ENCODE measurements at regions of chr2 and their contacts with region 1.

Region 1: DNA sequence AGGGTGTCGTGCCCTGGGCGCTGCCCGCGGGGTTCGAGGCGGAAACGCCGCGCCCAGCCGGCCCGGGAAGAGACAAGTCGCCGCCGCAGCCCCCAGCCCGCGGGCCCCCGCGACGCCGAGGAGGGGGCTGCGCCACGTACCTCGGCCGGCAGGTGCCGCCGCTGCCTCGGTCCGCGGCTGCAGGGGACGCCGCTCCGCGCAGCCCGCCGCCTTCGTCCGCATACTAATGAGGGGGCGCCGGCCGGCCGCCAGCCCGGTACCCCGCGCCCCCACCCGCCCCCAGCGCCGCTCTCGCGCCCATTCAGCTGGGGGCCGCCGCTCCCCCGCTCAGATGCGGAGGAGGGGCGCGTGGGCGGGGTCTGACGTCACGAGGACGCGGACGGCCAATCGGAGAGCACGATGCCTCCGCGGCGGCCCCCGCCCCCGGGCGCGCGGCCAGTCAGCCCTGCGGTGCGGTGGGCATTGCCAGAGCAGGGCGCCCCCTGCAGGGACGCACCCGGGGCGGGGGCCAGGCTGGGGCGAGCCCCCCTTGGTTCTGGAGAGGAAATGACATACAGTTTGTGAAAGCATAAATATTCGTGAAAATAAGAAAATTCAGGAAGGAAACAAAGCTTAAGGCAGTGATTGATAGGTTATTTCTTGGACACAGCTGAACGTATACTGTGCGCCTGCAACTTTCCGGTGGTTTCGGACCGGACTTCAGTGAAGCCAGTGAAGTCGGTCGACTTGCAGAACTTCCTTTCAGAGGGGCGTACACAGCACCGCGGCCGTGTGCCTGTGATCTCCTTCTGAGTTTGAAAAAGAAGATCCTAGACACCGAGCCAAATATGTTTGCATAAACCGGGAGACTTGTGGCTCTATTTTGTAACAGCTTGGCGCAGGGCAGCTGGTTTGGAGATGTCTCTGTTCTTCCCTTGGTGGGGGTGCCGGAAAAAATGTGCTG is at the start of gene ST3GAL5:
- DNase-seq: peak; percentile 91 to 98 (median 96)
- ATAC-seq: peak; percentile 89
- H3K4me3 ChIP-seq: peak within 1 kb of the TSS; percentile 63
- H3K27ac ChIP-seq: peak within 1 kb of the TSS; percentile 33
- H3K4me1 ChIP-seq: peaks cover 31 to 35% of the 10 kb centered on the region in 2 experiments; a peak in 4 of 5 replicates
- H3K27me3 ChIP-seq: no peaks in the 10 kb centered on the region
- CTCF ChIP-seq: peak; percentile 65 to 78 (median 68)
- EP300 ChIP-seq: no peak
- POLR2A ChIP-seq: peak; percentile 52
- RAD21 ChIP-seq: peak; percentile 50 to 56; a peak in 3 of 4 replicates
- polyA plus RNA-seq, gene ST3GAL5: 1.6 to 1.8 TPM

Region 2: DNA sequence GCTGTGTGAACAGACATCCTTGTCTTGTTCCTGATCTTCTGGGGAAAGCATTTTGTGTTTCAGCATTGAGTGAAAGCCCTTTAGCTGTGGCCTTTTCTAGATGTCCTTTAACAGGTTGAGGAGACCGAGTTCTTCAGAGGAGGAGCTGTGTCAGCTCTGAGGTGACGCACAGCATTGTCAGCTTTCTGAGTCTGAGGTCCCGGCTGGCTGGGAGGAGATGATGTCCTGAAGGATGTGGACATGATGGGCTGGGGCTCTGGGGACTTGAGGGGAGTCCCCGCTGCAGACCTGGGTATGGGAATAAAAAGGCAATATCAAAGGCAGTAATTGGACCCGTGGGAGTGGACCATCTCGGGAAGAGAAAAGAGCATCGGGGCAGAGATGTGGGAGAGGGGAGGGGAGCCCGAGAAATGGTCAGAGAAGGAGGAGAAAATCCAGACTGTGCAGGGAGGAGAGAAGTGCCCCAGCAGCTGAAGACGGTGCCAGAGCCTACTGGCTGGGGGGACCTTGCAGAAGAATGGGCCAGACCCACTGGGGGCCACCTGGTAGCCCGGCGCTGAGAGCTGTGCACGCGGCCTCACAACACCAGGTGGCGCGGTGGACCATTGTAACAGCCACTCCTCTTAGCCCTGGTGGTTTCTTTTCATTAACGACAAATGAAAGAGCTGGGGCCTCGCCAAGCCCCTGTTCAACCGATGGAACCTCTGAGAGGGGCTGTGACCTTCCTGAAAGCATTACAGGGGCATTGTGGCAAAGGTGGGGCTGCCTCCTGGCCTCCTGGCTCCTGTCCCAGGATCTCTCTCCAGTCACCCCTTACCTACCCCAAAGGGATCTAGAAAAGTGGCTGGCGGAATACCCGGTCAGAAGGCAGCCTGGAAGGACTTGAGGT is 61.7 kb before region 1 on chr2:
- CTCF ChIA-PET with region 1: interaction called, 5 read pairs
- POLR2A ChIA-PET with region 1: no interaction called
- in situ Hi-C with region 1: no loop called
- intact Hi-C with region 1: loop called (anchors 5 kb)
- DNase-seq: peak; percentile 74 to 81 (median 79)
- ATAC-seq: peak; percentile 98
- H3K4me3 ChIP-seq: no peak overlapping the region
- H3K27ac ChIP-seq: no peak overlapping the region; the same call in 2 of the 3 replicates
- H3K4me1 ChIP-seq: peaks cover 7 to 8% of the 10 kb centered on the region in 2 experiments; a peak in 4 of 5 replicates
- H3K27me3 ChIP-seq: peaks cover 3 to 6% of the 10 kb centered on the region in 2 experiments; a peak in 3 of 5 replicates
- CTCF ChIP-seq: peak; percentile 89 to 95 (median 93)
- EP300 ChIP-seq: no peak
- POLR2A ChIP-seq: no peak
- RAD21 ChIP-seq: peak; percentile 96 to 98

Region 3: GRCh38 chr2:85935746-85936208 is 46.8 kb after region 1 on chr2:
- CTCF ChIA-PET with region 1: no interaction called
- POLR2A ChIA-PET with region 1: no interaction called
- in situ Hi-C with region 1: no loop called
- intact Hi-C with region 1: loop called (anchors 2 kb)
- DNase-seq: peak in 1 of 4 experiments; percentile 53
- ATAC-seq: no peak
- H3K4me3 ChIP-seq: no peak overlapping the region
- H3K27ac ChIP-seq: no peak overlapping the region
- H3K4me1 ChIP-seq: peaks cover 8 to 17% of the 10 kb centered on the region in 2 experiments; a peak in 4 of 5 replicates
- H3K27me3 ChIP-seq: no peaks in the 10 kb centered on the region
- CTCF ChIP-seq: no peak
- EP300 ChIP-seq: peak; percentile 16; the same call in 1 of the 2 replicates
- POLR2A ChIP-seq: no peak
- RAD21 ChIP-seq: no peak

Region 4: GRCh38 chr2:85954590-85955458 is 65.9 kb after region 1 on chr2:
- CTCF ChIA-PET with region 1: no interaction called
- POLR2A ChIA-PET with region 1: no interaction called
- in situ Hi-C with region 1: no loop called
- intact Hi-C with region 1: loop called (anchors 5 kb)
- DNase-seq: no peak
- ATAC-seq: no peak
- H3K4me3 ChIP-seq: no peak overlapping the region
- H3K27ac ChIP-seq: no peak overlapping the region; the same call in 2 of the 3 replicates
- H3K4me1 ChIP-seq: peaks cover 22 to 24% of the 10 kb centered on the region in 2 experiments
- H3K27me3 ChIP-seq: no peaks in the 10 kb centered on the region
- CTCF ChIP-seq: no peak
- EP300 ChIP-seq: no peak
- POLR2A ChIP-seq: no peak
- RAD21 ChIP-seq: no peak

Region 5: DNA sequence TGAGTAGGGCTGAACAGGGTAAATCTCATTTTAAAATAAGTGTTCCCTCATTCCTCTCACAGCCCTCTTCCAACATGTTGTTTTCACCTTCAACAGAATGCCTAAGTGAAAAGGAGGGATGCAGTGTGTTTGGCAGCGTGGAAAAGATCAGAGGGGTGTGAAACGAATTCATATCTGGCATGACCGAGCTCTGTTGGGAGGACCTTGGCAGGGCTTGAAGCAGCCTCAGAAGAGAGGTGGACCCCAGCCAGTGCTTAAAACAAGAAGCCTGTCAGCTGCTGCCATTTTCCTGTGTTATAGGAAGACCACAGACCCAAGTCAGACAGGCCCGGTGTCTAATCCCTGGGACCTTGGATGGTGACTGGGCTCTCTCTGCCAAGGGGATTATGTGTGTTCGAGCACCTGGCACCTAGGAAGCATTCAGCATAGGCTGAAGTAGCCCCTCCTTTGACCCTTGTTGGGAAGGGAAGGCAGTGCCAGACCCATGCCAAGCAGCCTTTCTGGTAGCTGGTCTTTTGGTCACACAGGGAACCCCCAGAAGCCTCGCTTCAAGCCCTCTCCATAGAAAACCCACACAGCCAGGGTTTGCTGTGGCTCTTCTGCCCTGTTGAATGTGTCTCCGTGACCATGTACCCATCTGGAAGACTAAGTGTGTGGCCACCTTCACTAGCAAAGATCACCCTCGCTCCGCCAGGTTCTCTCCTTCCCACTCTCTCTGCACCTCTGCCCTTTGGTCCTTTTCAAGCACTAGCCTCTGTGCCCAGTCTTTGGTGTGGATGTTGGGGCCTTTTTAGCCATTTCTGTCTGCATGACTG is 87.4 kb after region 1 on chr2:
- CTCF ChIA-PET with region 1: no interaction called
- POLR2A ChIA-PET with region 1: no interaction called
- in situ Hi-C with region 1: no loop called
- intact Hi-C with region 1: no loop called
- DNase-seq: no peak
- ATAC-seq: no peak; the same call in 1 of the 3 replicates
- H3K4me3 ChIP-seq: no peak overlapping the region
- H3K27ac ChIP-seq: no peak overlapping the region
- H3K4me1 ChIP-seq: peaks cover 0 to 3% of the 10 kb centered on the region in 2 experiments; a peak in 2 of 5 replicates
- H3K27me3 ChIP-seq: no peaks in the 10 kb centered on the region
- CTCF ChIP-seq: no peak
- EP300 ChIP-seq: no peak
- POLR2A ChIP-seq: no peak
- RAD21 ChIP-seq: no peak

Region 6: DNA sequence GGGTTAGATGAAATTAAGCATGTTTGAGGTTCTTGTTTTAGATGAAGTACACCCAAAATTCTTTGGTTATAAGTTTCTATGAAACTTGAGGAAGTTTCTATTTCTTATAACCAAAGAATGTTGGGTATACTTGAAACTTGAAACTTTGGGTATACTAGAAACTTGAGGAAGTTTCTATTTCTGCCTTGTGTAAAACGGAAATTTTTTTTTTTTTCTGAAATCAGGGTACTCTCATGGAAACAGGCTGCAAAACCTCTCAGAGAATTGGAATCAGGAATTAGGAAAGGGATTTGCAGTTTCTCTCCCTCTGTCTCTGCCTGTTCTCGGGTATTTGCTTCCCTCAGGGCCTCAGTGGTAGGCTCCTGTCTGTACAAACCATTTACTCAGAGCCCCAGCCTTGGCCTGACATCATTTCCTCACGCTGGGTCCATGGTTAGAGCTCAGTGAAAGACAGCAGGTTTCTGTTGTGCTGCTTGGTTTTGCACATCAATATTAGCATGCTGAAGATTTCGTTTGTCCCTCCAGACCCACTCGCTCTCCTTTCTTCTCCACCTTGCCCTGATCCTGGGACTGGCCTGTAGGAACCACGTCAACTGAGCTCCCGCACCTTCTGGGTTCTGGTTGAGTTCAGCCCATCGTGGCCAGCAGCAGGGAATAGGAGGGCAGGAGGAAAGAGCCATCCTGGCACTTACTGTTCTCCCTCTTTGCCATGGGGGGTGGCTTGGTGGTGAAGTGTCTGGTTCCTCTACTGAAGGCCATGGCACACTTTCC is 110.3 kb after region 1 on chr2:
- CTCF ChIA-PET with region 1: no interaction called
- POLR2A ChIA-PET with region 1: interaction called, 3 read pairs
- in situ Hi-C with region 1: no loop called
- intact Hi-C with region 1: loop called (anchors 10 kb)
- DNase-seq: peak in 1 of 4 experiments; percentile 31
- ATAC-seq: 0 out of 3 replicates have a peak, but pooled peaks have one; percentile 2
- H3K4me3 ChIP-seq: no peak overlapping the region
- H3K27ac ChIP-seq: peak overlapping the region; percentile 46
- H3K4me1 ChIP-seq: peaks cover 74 to 93% of the 10 kb centered on the region in 2 experiments
- H3K27me3 ChIP-seq: no peaks in the 10 kb centered on the region
- CTCF ChIP-seq: no peak
- EP300 ChIP-seq: no peak
- POLR2A ChIP-seq: no peak
- RAD21 ChIP-seq: no peak

Region 7: DNA sequence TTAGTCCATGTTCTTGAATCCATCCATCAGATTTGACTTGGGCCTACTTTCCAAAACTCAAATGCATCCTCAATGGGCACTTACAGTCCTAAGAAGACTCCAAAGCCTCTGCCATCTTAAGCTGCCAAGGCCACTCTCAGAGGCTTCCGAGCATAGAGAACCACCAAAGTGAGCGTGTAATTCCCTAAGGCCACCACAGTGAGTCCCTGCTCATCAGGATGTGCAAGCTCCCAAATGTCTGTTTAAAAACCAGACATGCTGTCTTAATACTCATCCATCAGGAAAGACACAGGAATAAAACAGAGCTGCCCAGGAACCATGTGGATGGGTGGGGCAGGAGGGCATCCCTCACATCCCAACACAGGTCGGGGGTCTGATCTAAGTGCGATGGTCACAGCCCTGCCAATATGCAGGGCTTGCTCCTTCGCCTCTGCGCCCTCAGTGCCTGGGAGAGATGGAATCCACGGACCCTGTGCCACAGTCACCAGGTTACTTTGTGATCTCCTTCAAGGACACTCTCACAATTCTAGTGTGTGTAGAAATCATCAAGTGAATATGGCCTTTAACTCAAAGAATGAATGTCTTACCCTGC is 136.4 kb after region 1 on chr2:
- CTCF ChIA-PET with region 1: no interaction called
- POLR2A ChIA-PET with region 1: interaction called, 5 read pairs
- in situ Hi-C with region 1: no loop called
- intact Hi-C with region 1: loop called (anchors 2 kb)
- DNase-seq: no peak
- ATAC-seq: peak; percentile 39
- H3K4me3 ChIP-seq: no peak overlapping the region
- H3K27ac ChIP-seq: no peak overlapping the region
- H3K4me1 ChIP-seq: peaks cover 0 to 10% of the 10 kb centered on the region in 2 experiments; a peak in 2 of 5 replicates
- H3K27me3 ChIP-seq: no peaks in the 10 kb centered on the region
- CTCF ChIP-seq: peak; percentile 4 to 21 (median 18); a peak in 1 of 6 replicates
- EP300 ChIP-seq: no peak
- POLR2A ChIP-seq: no peak
- RAD21 ChIP-seq: peak in 1 of 2 experiments; percentile 25; a peak in 1 of 4 replicates

Region 8: GRCh38 chr2:86079981-86080911 is 191.3 kb after region 1 on chr2:
- CTCF ChIA-PET with region 1: interaction called, 17 read pairs
- POLR2A ChIA-PET with region 1: interaction called, 3 read pairs
- in situ Hi-C with region 1: no loop called
- intact Hi-C with region 1: loop called (anchors 5 kb)
- DNase-seq: peak; percentile 38 to 75 (median 54)
- ATAC-seq: peak; percentile 99
- H3K4me3 ChIP-seq: no peak overlapping the region
- H3K27ac ChIP-seq: no peak overlapping the region
- H3K4me1 ChIP-seq: no peaks in the 10 kb centered on the region; a peak in 1 of 5 replicates
- H3K27me3 ChIP-seq: no peaks in the 10 kb centered on the region
- CTCF ChIP-seq: peak; percentile 80 to 87 (median 85)
- EP300 ChIP-seq: no peak
- POLR2A ChIP-seq: no peak
- RAD21 ChIP-seq: peak; percentile 85 to 89

Measured in K562 (cell line).